ENCODE measurements at regions of chr2 and their contacts with region 1.

Region 1: DNA sequence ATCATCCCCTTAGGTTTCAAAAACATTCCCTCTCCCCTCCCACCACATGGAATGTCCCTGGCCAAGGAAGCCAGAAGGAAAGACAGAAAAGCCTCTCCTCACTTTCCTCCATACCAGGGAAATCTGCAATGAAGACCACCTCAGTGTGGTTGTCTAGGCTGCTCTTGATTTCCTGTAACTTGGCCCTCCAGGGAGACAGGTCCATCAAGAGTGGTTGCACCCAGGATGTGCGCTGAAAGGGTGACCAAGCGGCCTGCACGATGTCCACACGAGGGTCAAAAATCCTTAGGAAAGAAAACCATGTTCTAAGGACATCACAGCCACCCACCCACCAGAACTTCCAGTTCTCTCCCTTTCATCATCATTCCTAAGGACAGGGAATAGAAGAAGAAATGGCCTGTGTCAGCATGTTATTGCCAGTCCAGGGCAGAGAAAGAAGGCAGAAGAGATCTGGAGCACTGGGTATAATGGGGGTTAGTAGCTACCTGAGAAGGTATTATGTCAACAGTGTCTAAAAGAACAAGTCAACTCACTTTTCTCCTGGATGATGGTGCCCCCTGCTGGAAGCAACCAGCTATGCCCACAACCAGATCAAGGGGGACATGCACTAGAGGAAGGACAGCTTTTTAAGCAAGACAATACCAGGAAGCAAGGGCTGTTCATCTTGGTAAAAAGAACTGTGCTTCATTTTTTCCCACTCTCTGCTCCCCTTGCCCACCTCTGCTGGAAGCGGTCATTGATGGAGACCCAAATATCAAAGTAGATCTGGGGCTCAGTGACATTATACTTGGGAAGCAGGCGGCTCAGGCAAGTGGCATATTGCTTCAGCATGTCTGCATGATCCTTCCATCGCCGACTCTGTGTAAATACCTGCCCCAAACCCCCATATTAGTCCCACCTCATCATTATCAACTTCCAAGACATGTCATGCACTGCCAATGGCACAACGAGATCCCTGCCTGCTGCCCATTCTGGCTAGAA is 9.3 kb downstream of the GGCX start:
- DNase-seq: peak; percentile 90
- ATAC-seq: peak; percentile 97
- H3K4me3 ChIP-seq: no peak overlapping the region
- H3K4me3 Mint-ChIP-seq: no peak overlapping the region
- H3K27ac ChIP-seq: no peak overlapping the region
- H3K27ac Mint-ChIP-seq: peak overlapping the region; percentile 81
- H3K4me1 ChIP-seq: peaks cover 0 to 3% of the 10 kb centered on the region in 2 donors
- H3K4me1 Mint-ChIP-seq: peaks cover 4% of the 10 kb centered on the region
- H3K27me3 ChIP-seq: no peaks in the 10 kb centered on the region
- H3K27me3 Mint-ChIP-seq: no peaks in the 10 kb centered on the region
- CTCF ChIP-seq: peak; percentile 91

Region 2: DNA sequence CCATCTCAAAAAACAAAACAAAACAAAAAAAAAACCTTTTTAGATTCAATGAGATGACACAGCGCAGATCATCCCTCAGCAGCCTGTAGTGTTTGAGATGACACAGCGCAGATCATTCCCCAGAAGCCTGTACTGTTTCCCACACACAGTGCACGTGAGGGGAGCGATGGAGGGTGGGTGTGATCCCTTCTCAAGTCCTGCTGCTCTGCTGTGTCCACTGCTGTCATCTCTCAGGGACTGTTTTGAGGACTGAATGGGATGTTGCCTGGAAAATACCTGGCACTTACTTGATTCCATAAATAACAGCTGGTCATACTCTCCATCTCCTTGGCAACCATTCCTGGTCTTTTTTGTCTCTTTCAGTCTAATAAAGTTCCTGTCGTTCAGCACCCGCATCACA is 249.9 kb before region 1 on chr2:
- CTCF ChIA-PET with region 1: interaction called, 52 read pairs
- POLR2A ChIA-PET with region 1: no interaction called
- intact Hi-C with region 1: loop called (anchors 1 kb)
- DNase-seq: no peak
- ATAC-seq: no peak
- H3K4me3 ChIP-seq: no peak overlapping the region
- H3K4me3 Mint-ChIP-seq: no peak overlapping the region
- H3K27ac ChIP-seq: no peak overlapping the region
- H3K27ac Mint-ChIP-seq: no peak overlapping the region
- H3K4me1 ChIP-seq: peaks cover 0 to 3% of the 10 kb centered on the region in 2 donors
- H3K4me1 Mint-ChIP-seq: peaks cover 8% of the 10 kb centered on the region
- H3K27me3 ChIP-seq: peaks cover 0 to 14% (median 3%) of the 10 kb centered on the region in 4 experiments
- H3K27me3 Mint-ChIP-seq: peaks cover 29% of the 10 kb centered on the region
- CTCF ChIP-seq: no peak

Region 3: DNA sequence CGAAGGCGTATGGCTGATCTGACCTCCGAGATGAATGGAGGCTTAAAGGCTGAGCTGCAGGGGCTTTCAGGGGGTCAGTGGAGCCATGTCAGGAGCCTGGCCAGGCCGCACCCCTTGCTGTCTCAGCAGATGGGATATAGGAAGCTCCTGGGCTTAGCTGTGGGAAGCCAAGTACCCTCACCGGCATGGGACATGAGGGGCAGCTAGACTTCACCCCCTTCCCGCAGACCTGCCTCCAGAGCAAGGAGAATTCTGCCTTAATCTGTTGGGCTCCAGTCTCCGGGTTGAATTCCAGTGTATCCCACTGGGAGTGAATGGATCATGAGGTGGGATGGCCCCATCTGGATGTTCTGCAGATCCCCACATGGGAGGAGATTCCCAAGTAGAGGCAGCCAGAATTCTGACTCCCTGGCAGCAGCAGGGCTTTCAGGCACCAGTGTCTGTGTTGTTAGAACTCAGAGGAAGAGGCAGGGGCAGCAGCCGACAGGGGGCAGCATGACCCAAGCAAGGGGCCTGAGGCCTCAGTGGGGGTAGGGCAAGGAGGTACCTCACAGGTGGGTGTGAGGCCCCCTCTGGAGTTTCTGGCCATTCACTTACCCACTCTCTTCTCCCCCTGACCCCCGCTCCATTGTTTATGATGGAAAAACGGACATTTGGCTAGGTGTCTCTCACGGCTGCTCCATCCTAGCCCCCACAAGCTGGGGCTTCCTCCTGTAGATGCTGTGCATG is 160.9 kb before region 1 on chr2:
- CTCF ChIA-PET with region 1: interaction called, 182 read pairs
- POLR2A ChIA-PET with region 1: interaction called, 4 read pairs
- intact Hi-C with region 1: loop called (anchors 1 kb)
- DNase-seq: peak; percentile 80
- ATAC-seq: peak; percentile 25
- H3K4me3 ChIP-seq: no peak overlapping the region
- H3K4me3 Mint-ChIP-seq: peak overlapping the region; percentile 15
- H3K27ac ChIP-seq: peak overlapping the region; percentile 68 to 81
- H3K27ac Mint-ChIP-seq: peak overlapping the region; percentile 71
- H3K4me1 ChIP-seq: peaks cover 25 to 26% of the 10 kb centered on the region in 2 donors
- H3K4me1 Mint-ChIP-seq: peaks cover 31% of the 10 kb centered on the region
- H3K27me3 ChIP-seq: no peaks in the 10 kb centered on the region
- H3K27me3 Mint-ChIP-seq: no peaks in the 10 kb centered on the region
- CTCF ChIP-seq: peak; percentile 81

Region 4: DNA sequence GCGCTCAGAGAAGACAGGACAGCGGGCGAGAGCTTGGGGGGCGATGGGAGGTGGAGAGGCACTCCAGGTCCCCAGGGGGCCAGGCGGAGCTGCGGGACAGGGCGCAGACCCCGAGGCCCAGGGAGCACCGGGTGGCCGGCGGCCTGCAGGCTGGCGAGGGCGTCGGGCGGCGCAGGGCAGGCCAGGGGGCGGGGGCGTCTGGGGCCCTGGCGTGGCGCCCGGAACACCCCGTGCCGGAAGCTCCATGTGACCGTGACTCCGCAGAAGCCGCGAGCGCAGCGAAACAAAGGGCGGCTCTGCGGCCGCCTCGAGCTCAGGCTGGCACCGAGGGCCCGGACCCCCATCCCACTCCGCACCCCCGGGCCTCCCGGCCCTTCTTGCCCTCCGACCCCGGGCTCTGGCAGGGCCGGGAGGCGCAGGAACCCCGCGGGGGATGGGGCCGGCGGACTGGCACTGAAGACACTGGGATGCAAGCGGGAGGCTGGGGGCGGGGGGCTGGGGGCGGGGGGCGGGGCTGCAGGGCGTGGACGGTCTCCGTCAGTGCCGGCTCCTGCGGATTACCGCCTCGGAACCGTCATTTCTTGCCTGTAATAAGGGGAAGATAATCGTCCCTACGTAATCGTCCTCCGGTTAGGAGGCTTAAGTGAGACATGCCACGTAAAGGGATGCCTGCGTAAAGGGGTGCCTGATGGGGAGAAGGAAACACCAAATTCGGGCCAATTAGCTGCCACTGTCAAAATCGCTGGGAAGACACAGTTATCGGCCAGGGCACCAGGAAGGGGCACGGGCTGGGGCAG is 114.3 kb before region 1 on chr2:
- CTCF ChIA-PET with region 1: interaction called, 11 read pairs
- POLR2A ChIA-PET with region 1: no interaction called
- intact Hi-C with region 1: no loop called
- DNase-seq: peak; percentile 92
- ATAC-seq: peak; percentile 87
- H3K4me3 ChIP-seq: peak overlapping the region in 4 of 5 experiments; percentile 41 to 65 (median 58)
- H3K4me3 Mint-ChIP-seq: peak overlapping the region; percentile 91
- H3K27ac ChIP-seq: peak overlapping the region; percentile 74 to 86
- H3K27ac Mint-ChIP-seq: peak overlapping the region; percentile 98
- H3K4me1 ChIP-seq: peaks cover 30 to 40% of the 10 kb centered on the region in 2 donors
- H3K4me1 Mint-ChIP-seq: peaks cover 38% of the 10 kb centered on the region
- H3K27me3 ChIP-seq: peaks cover 0 to 2% (median 0%) of the 10 kb centered on the region in 4 experiments
- H3K27me3 Mint-ChIP-seq: no peaks in the 10 kb centered on the region
- CTCF ChIP-seq: no peak

Region 5: GRCh38 chr2:85511008-85511811 is 40.8 kb before region 1 on chr2:
- CTCF ChIA-PET with region 1: no interaction called
- POLR2A ChIA-PET with region 1: no interaction called
- intact Hi-C with region 1: no loop called
- DNase-seq: no peak
- ATAC-seq: no peak
- H3K4me3 ChIP-seq: no peak overlapping the region
- H3K4me3 Mint-ChIP-seq: no peak overlapping the region
- H3K27ac ChIP-seq: no peak overlapping the region
- H3K27ac Mint-ChIP-seq: no peak overlapping the region
- H3K4me1 ChIP-seq: no peaks in the 10 kb centered on the region
- H3K4me1 Mint-ChIP-seq: no peaks in the 10 kb centered on the region
- H3K27me3 ChIP-seq: no peaks in the 10 kb centered on the region
- H3K27me3 Mint-ChIP-seq: no peaks in the 10 kb centered on the region
- CTCF ChIP-seq: no peak

Region 6: DNA sequence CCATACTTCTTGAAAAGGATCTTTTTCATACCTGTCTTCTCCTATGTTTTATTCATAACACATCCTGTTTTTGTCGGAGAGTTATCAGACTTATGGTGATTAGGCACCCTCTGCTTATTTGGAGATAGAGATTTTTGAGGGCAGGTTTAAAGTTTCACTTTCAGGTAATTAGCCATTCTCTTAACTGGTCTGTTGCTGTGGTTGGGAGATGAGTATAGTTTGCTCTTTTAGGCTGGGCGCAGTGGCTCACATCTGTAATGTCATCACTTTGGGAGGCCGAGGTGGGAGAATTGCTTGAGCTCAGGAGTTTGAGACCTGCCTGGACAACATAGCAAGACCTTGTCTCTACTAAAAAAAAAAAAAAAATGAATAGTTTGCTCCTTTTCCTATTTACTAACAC is 90.7 kb after region 1 on chr2:
- CTCF ChIA-PET with region 1: interaction called, 10 read pairs
- POLR2A ChIA-PET with region 1: no interaction called
- intact Hi-C with region 1: no loop called
- DNase-seq: no peak
- ATAC-seq: no peak
- H3K4me3 ChIP-seq: no peak overlapping the region
- H3K4me3 Mint-ChIP-seq: no peak overlapping the region
- H3K27ac ChIP-seq: no peak overlapping the region
- H3K27ac Mint-ChIP-seq: no peak overlapping the region
- H3K4me1 ChIP-seq: peaks cover 6 to 9% of the 10 kb centered on the region in 2 donors
- H3K4me1 Mint-ChIP-seq: peaks cover 5% of the 10 kb centered on the region
- H3K27me3 ChIP-seq: no peaks in the 10 kb centered on the region
- H3K27me3 Mint-ChIP-seq: no peaks in the 10 kb centered on the region
- CTCF ChIP-seq: no peak